ENCODE measurements at regions of chr20 and their contacts with region 1.

Region 1: GRCh38 chr20:50987592-50988210 is 29.1 kb downstream of the MOCS3 start:
- DNase-seq: peak; percentile 73
- H3K4me3 ChIP-seq: no peak overlapping the region
- H3K27ac ChIP-seq: no peak overlapping the region
- H3K4me1 ChIP-seq: no peaks in the 10 kb centered on the region
- H3K27me3 ChIP-seq: peaks cover 1 to 2% of the 10 kb centered on the region in 2 experiments
- CTCF ChIP-seq: peak; percentile 60 to 82
- POLR2A ChIP-seq: no peak

Region 2: DNA sequence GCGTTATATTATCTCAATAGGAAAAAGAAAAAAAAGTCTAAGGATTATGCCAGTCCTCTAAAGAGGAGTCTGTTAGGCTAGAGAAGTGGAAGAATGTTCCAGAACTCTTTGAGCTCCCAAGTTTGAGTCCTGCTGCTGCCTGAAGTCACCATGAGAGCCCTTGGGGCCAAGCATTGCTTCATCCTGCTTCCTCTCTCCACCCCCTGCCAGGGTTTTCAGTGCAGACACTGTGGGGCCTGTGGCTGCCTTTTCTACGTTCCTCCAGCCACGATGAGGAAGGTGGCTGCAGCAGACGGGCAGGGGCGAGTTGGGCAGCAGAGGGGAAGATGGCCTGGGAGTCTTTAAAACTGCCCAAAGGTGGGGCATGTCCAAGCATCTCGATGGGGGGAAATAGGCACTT is 249.6 kb after region 1 on chr20:
- CTCF ChIA-PET with region 1: interaction called, 6 read pairs
- POLR2A ChIA-PET with region 1: no interaction called
- dilution Hi-C with region 1: no loop called
- intact Hi-C with region 1: loop called (anchors 5 kb)
- DNase-seq: no peak
- H3K4me3 ChIP-seq: no peak overlapping the region
- H3K27ac ChIP-seq: no peak overlapping the region
- H3K4me1 ChIP-seq: no peaks in the 10 kb centered on the region
- H3K27me3 ChIP-seq: peaks cover 0 to 7% of the 10 kb centered on the region in 2 experiments
- CTCF ChIP-seq: no peak
- POLR2A ChIP-seq: no peak

Region 3: DNA sequence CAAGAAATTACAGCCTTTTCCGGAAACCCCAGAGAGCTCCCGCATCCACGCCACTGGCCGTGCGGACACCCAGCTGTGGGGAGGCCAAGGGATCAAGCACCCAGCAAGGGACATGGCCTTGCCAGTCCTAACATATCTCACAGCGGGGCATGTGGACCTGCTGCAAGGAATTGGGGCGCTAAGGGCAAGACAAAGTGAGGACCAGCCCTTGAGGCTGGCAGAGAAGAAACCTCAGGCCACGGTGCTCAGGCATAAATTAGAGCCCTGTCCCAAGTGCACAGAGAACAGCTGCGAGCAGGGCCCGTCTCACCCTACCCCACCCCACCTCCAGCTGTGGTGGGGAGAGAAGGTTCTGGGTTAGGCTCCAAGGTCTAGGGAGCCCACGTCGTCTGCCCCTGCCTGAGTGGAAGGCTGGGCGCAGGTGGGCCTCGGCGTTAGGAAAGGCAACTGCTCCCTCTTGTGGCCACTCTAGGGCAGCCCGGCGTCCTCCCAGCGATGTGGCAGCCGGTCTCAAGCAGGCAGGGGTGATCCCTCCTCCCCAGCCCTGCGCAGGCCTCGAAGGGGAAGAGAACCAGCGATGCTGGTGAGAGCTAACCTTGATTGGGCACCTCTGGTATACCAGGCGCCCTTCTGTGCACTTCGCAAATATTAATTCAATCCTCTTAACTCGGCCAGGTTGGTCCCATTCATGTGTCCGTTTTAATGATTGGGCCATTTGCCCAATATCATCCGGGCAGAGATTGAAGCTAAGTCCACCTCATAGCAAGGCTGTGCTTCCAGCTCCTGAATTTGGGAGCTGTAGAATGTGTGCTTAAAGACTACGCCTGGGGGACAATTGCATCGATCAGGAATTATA is 319.0 kb after region 1 on chr20:
- CTCF ChIA-PET with region 1: interaction called, 311 read pairs
- POLR2A ChIA-PET with region 1: no interaction called
- dilution Hi-C with region 1: no loop called
- intact Hi-C with region 1: loop called (anchors 1 kb)
- DNase-seq: peak; percentile 63
- H3K4me3 ChIP-seq: no peak overlapping the region
- H3K27ac ChIP-seq: no peak overlapping the region
- H3K4me1 ChIP-seq: no peaks in the 10 kb centered on the region
- H3K27me3 ChIP-seq: peaks cover 0 to 3% of the 10 kb centered on the region in 2 experiments
- CTCF ChIP-seq: peak; percentile 91 to 96
- POLR2A ChIP-seq: no peak

Region 4: GRCh38 chr20:51326201-51326819 is 338.6 kb after region 1 on chr20:
- CTCF ChIA-PET with region 1: interaction called, 95 read pairs
- POLR2A ChIA-PET with region 1: no interaction called
- dilution Hi-C with region 1: no loop called
- intact Hi-C with region 1: no loop called
- DNase-seq: peak; percentile 39
- H3K4me3 ChIP-seq: no peak overlapping the region
- H3K27ac ChIP-seq: no peak overlapping the region
- H3K4me1 ChIP-seq: no peaks in the 10 kb centered on the region
- H3K27me3 ChIP-seq: peaks cover 0 to 9% of the 10 kb centered on the region in 2 experiments
- CTCF ChIP-seq: peak; percentile 64 to 80
- POLR2A ChIP-seq: no peak

Region 5: DNA sequence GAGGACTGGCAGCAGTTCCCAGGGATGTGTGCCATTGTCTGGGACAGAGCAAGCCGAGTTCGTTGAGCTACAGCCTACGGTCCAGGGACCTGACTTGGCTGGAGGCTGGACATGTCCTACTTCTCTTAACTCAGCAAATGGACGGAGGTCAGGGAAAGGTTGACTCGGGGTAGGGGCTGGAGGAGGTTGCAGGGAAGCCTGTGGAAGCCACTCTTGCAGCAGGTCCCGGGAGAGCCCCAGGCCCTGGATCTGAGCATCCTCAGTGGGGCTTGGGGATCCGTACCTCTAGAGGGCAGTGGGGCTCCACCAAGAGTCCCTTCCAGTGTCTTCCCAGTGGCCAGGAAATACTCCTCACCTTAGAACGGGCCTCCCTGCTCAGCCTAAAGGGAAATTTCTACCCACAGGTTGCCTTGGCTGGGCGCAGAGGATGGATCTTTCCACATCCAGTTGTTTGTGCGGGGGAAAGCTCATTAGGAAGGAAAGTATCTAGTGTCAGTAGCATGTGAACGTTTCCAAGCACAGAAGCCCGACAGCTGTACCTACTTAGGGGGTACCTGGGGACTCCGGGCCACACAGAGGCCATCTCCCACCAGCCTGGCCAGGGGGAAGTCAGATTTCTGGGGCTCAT is 384.6 kb after region 1 on chr20:
- CTCF ChIA-PET with region 1: interaction called, 5 read pairs
- POLR2A ChIA-PET with region 1: no interaction called
- dilution Hi-C with region 1: no loop called
- intact Hi-C with region 1: loop called (anchors 1 kb)
- DNase-seq: peak; percentile 73
- H3K4me3 ChIP-seq: no peak overlapping the region
- H3K27ac ChIP-seq: no peak overlapping the region
- H3K4me1 ChIP-seq: peaks cover 26% of the 10 kb centered on the region
- H3K27me3 ChIP-seq: no peaks in the 10 kb centered on the region
- CTCF ChIP-seq: peak; percentile 84 to 93
- POLR2A ChIP-seq: no peak

Region 6: DNA sequence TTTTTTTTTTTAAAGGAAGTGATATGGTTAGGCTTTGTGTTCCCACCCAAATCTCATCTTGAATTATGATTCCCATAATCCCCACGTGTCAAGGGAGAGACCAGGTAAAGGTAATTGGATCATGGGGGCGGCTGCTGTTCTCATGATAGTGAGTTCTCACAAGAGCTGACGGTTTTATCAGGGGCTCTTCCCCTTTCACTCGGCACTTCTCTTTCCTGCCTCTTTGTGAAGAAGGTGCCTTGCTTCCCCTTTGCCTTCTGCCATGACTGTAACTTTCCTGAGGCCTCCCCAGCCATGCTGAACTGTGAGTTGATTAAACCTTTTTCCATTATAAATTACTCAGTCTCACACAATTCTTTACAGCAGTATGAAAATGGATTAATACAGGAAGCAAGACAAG is 1139.6 kb after region 1 on chr20:
- CTCF ChIA-PET with region 1: interaction called, 10 read pairs
- POLR2A ChIA-PET with region 1: no interaction called
- dilution Hi-C with region 1: no loop called
- intact Hi-C with region 1: no loop called
- DNase-seq: no peak
- H3K4me3 ChIP-seq: no peak overlapping the region
- H3K27ac ChIP-seq: no peak overlapping the region
- H3K4me1 ChIP-seq: no peaks in the 10 kb centered on the region
- H3K27me3 ChIP-seq: no peaks in the 10 kb centered on the region
- CTCF ChIP-seq: no peak
- POLR2A ChIP-seq: no peak

Measured in endothelial cell of umbilical vein (primary cell).